PC-3 (cell line): ENCODE measurements at regions of chr3 and their contacts with region 1.

Region 1: GRCh38 chr3:101809178-101810021 is 30.4 kb downstream of the NXPE3 start:
- DNase-seq: peak; percentile 74
- ATAC-seq: peak; percentile 78
- H3K4me3 ChIP-seq: no peak overlapping the region
- H3K27ac ChIP-seq: peak overlapping the region; percentile 58
- H3K4me1 ChIP-seq: peaks cover 19% of the 10 kb centered on the region
- H3K27me3 ChIP-seq: no peaks in the 10 kb centered on the region
- CTCF ChIP-seq: peak; percentile 93

Region 2: DNA sequence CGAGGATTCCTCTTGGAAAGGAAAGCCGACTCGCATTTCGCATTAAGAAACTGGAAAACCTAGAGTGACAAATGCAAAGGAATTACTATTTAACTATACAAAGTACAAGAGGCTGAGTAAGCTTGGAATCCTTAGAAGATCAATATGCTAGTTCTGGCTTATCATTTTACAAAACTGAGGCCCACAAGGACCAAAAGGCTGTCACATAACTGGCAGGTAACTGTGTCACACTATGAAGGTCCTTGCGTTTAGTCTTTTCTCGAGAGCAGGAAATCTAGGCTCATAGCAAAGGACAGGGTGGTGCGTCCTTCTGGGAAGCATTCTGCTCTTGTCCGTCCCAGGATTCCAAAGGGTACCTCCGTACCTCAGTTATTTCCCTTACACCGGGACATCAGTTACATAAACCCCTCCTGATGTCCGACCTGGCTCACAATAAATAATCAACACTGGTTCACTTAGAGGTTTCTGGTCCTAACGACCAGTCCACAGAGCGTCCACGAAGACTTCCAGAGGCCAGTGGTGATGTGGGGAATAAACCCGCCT is 123.5 kb before region 1 on chr3:
- CTCF ChIA-PET with region 1: no interaction called
- POLR2A ChIA-PET with region 1: no interaction called
- intact Hi-C with region 1: no loop called
- DNase-seq: no peak
- ATAC-seq: peak; percentile 7; the same call in 1 of the 2 replicates
- H3K4me3 ChIP-seq: peak overlapping the region; percentile 89
- H3K27ac ChIP-seq: peak overlapping the region; percentile 69
- H3K4me1 ChIP-seq: peaks cover 27% of the 10 kb centered on the region
- H3K27me3 ChIP-seq: no peaks in the 10 kb centered on the region
- CTCF ChIP-seq: no peak

Region 3: GRCh38 chr3:101861212-101861788 is 51.9 kb after region 1 on chr3:
- CTCF ChIA-PET with region 1: no interaction called
- POLR2A ChIA-PET with region 1: interaction called, 5 read pairs
- intact Hi-C with region 1: loop called (anchors 5 kb)
- DNase-seq: no peak
- ATAC-seq: no peak
- H3K4me3 ChIP-seq: no peak overlapping the region
- H3K27ac ChIP-seq: peak overlapping the region; percentile 10; the same call in 1 of the 2 replicates
- H3K4me1 ChIP-seq: peaks cover 12% of the 10 kb centered on the region
- H3K27me3 ChIP-seq: no peaks in the 10 kb centered on the region
- CTCF ChIP-seq: no peak

Region 4: DNA sequence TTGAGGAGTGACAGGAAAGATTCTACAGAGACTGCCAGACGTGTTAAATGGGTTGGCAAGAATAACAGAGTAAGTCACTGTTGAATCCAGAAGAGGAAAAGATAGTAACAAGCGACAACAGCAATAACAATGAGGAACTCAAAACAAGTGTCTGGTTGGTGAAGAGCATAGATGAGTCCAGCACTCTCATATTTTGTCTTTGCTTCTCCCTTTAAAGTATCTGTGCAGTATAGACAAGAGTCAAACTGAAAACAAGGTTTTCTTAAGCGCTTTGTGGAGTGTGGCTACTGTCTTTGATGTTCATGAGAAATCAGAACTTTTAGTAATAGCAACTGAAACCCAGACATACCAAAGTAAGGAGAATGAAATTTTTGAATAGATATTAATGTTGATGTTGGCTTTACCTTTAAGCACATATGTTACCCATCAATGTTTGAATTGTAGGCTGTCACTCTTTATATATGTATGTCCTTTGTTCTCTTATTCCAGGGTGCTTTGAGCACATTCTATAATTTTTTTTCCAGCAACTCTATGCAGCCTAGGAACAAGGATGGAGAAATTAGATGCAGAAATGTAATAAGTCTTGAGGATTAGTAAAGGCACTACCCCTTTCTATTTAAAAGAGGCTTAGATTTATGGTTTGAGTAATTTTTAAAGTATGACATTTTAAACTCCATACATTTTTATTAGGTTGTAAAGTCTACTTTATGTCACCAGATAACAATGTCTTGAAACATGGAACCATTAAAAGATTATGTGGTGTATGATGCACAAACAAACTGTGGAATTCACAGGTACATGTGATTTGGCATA is 225.4 kb after region 1 on chr3:
- CTCF ChIA-PET with region 1: no interaction called
- POLR2A ChIA-PET with region 1: no interaction called
- intact Hi-C with region 1: loop called (anchors 1 kb)
- DNase-seq: peak; percentile 68
- ATAC-seq: peak; percentile 85
- H3K4me3 ChIP-seq: no peak overlapping the region
- H3K27ac ChIP-seq: peak overlapping the region; percentile 60
- H3K4me1 ChIP-seq: peaks cover 15% of the 10 kb centered on the region
- H3K27me3 ChIP-seq: no peaks in the 10 kb centered on the region
- CTCF ChIP-seq: no peak

Region 5: DNA sequence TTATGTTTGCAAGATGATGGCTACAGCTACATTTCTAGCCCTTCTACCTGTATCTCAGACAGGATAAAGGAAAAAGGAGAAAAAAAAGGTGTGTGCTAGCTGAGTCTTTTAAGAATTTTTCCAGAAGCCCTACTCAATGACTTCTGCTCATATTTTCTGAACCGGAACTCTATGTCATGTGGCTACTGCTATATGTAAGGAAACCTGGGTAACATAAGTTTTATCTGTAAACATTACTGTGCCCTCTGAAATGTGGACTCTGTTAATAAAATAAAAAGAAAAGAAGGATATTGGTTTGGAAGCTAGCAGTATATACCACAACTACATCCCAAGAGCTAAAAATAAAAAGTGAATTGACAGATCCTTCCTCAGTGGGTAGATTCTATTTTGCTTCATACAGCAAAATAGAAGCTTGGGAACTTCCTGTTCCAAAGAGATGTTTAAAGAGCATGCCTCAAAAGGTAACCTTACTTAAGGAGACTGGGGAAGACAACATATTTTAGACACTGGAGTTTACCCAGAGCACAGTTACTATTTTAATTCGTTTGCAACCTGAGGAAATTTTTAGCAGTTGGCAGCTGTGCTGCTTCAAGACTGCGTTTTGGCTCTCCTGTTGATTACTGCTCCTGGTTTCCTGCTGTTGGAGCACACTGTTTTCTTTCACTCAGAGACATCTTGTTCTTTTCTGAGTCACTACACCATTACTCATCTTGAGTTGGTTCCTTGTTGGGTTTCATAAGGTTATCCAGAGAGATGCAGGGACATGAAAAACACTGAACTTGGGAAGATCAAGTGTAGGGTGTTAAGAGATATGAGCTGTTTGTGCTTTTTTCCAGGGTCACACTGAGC is 320.6 kb after region 1 on chr3:
- CTCF ChIA-PET with region 1: no interaction called
- POLR2A ChIA-PET with region 1: no interaction called
- intact Hi-C with region 1: loop called (anchors 10 kb)
- DNase-seq: peak; percentile 84
- ATAC-seq: peak; percentile 81
- H3K4me3 ChIP-seq: no peak overlapping the region
- H3K27ac ChIP-seq: peak overlapping the region; percentile 89
- H3K4me1 ChIP-seq: peaks cover 31% of the 10 kb centered on the region
- H3K27me3 ChIP-seq: no peaks in the 10 kb centered on the region
- CTCF ChIP-seq: no peak

Region 6: DNA sequence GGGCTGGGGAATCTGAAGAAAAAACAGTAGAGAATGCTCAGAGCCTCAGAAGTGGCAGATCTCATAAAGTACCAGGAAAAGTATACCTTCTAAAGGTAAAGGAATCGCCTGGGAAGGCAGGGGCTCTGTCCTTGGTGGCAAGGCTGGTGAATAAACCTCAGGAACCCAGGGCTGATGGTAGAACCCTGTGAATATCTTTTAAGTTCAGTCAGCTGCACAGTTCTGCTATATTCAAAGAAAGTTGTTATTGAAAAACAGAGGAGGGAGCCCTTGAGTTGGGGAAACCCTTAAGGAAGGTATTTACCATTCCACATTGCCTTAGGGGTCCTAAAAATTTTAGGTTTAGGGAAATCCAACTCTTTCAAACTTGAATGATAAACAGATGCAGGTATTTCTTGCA is 656.6 kb after region 1 on chr3:
- CTCF ChIA-PET with region 1: no interaction called
- POLR2A ChIA-PET with region 1: no interaction called
- intact Hi-C with region 1: loop called (anchors 5 kb)
- DNase-seq: peak; percentile 51
- ATAC-seq: peak; percentile 90
- H3K4me3 ChIP-seq: no peak overlapping the region
- H3K27ac ChIP-seq: no peak overlapping the region
- H3K4me1 ChIP-seq: peaks cover 6% of the 10 kb centered on the region
- H3K27me3 ChIP-seq: no peaks in the 10 kb centered on the region
- CTCF ChIP-seq: peak; percentile 66

Region 7: GRCh38 chr3:102673271-102674115 is 864.1 kb after region 1 on chr3:
- CTCF ChIA-PET with region 1: no interaction called
- POLR2A ChIA-PET with region 1: no interaction called
- intact Hi-C with region 1: loop called (anchors 5 kb)
- DNase-seq: peak; percentile 71
- ATAC-seq: peak; percentile 86
- H3K4me3 ChIP-seq: 0 out of 2 replicates have a peak overlapping the region, but pooled peaks have one; percentile 17
- H3K27ac ChIP-seq: no peak overlapping the region
- H3K4me1 ChIP-seq: no peaks in the 10 kb centered on the region
- H3K27me3 ChIP-seq: peaks cover 25% of the 10 kb centered on the region; the same call in 1 of the 2 replicates
- CTCF ChIP-seq: peak; percentile 96